Aorta (tissue), 5 donors: ENCODE measurements at regions of chr3 and their contacts with region 1.

Region 1: GRCh38 chr3:128051837-128052594 is at the start of gene SEC61A1:
- DNase-seq: peak; percentile 97 to 98
- ATAC-seq: peak; percentile 98
- H3K4me3 ChIP-seq: peak within 1 kb of the TSS; percentile 62 to 99
- H3K27ac ChIP-seq: peak within 1 kb of the TSS; percentile 74 to 91
- H3K4me1 ChIP-seq: peaks cover 3 to 16% of the 10 kb centered on the region in 2 donors
- H3K27me3 ChIP-seq: no peaks in the 10 kb centered on the region
- total RNA-seq, gene SEC61A1: 156 to 172 TPM

Region 2: DNA sequence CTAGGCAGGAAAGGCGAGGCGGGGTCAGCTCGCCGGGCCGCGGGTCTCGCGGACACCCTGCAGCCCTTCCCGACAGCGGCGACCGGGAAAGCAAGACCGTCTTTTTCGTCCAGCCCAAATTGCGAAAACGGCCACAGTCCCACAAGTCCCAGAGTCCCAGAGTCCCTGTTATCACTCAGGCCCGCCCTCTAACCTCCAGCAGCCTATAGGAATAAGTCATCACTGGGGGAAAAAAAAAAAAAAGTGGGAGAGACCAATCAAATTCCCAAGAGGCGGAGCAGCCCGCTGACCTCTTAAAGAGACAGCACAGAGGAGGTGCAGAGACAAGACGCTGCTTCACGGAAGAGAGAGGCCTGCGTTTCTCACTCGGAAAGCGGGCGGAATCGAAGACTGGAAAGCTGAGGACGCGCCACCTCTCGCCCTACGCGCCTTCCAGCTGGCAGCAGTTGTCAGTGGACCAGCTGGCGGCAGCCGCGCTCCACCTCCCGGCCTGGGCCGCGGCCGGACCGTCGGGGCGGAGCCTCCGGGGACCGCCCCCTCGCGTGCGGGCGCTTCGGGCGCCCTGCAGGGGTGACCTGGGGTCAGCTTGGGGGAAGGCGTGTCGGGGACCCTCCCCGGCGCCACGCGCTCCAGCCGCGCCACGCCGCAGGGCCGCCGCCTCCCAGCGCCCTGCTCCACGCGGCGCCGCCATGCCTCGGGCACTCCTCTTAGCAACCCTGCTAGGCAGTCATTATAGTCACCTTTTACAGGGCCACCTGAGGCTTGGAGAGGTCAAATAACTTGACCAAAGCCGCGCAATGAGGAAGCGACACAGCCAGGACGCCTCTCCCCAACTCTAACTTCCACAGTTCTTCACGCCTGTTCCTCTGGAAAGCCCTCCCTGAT is 461.2 kb before region 1 on chr3 and contains the start of gene TPRA1:
- intact Hi-C with region 1: loop called in 1 of 2 experiments (anchors 10 kb)
- DNase-seq: peak; percentile 92 to 94
- ATAC-seq: peak; percentile 94
- H3K4me3 ChIP-seq: peak within 1 kb of the TSS; percentile 78 to 89
- H3K27ac ChIP-seq: peak within 1 kb of the TSS; percentile 18 to 86
- H3K4me1 ChIP-seq: no peaks in the 10 kb centered on the region
- H3K27me3 ChIP-seq: no peaks in the 10 kb centered on the region
- total RNA-seq, gene TPRA1: 20.0 to 28.5 TPM

Region 3: DNA sequence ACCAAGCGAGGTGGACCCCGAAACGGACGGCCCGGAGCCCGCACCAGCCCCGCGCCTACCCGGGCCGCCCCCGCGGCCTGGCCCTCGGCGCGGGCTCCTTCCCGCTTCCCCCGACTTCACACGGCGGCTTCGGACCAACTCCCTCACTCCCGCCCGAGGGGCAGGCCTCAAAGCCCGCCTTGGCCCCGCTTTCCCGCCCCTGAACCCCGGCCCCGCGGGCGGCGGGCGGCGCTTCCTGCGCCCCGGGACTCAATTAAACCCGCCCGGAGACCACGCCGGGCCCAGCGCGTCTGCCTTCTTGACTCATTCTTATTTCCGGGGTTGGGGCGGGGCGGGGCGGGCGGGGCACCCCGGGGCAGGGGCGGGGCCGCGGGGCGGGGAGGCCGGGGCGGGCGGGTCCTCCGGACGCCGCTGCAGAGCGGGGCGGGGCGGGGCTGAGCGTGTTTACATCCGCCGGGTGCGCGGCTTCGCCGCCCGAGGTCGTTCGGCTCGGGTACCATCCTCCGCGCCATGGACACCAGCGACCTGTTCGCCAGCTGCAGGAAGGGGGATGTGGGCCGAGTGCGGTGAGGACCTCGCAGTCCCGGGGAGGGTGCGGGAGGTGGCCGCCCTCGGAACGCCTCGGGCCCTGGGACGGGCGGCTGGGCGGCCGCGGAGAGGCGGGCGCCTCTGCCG is 379.4 kb before region 1 on chr3 and contains the start of gene ABTB1:
- intact Hi-C with region 1: loop called in 1 of 2 experiments (anchors 10 kb)
- DNase-seq: peak; percentile 94 to 95
- ATAC-seq: peak; percentile 85
- H3K4me3 ChIP-seq: peak within 1 kb of the TSS; percentile 81 to 88
- H3K27ac ChIP-seq: peak within 1 kb of the TSS in 1 of 2 donors; percentile 52
- H3K4me1 ChIP-seq: no peaks in the 10 kb centered on the region
- H3K27me3 ChIP-seq: no peaks in the 10 kb centered on the region
- total RNA-seq, gene ABTB1: 49.8 to 75.4 TPM